OCI-LY7 (cell line): ENCODE measurements at regions of chr2 and their contacts with region 1.

Region 1: GRCh38 chr2:127753374-127753773 is 52.1 kb downstream of the SFT2D3 start:
- DNase-seq: no peak
- H3K4me3 ChIP-seq: no peak overlapping the region
- H3K27ac ChIP-seq: no peak overlapping the region
- H3K4me1 ChIP-seq: peaks cover 13% of the 10 kb centered on the region
- CTCF ChIP-seq: no peak

Region 2: DNA sequence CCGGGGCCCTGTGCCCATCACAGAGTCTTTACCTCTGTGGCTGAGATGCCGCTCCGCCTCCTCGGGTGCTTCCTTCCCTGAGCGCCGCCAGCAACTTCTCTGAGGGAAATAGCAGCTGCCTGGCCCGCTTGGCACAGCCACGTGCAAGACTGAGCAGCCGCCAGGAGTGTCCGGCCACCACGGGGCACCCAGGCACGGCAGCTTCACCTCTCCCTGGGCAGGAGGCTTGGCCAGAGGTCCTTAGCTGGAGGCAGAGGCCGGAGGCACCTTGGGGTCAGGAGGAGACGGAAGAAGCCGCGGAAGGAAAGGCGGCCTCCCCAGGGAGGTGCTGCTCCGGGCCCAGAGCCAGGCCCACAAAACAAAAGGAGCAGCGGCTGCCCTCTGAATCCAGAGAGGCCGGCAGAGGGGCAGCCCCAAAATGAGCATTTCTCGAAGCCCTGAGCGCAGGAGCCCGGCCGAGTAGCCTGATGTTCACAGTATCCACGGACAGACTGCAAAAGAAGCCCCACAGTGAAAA is 72.0 kb before region 1 on chr2:
- CTCF ChIA-PET with region 1: no interaction called
- POLR2A ChIA-PET with region 1: no interaction called
- intact Hi-C with region 1: no loop called
- DNase-seq: no peak
- H3K4me3 ChIP-seq: no peak overlapping the region
- H3K27ac ChIP-seq: no peak overlapping the region
- H3K4me1 ChIP-seq: no peaks in the 10 kb centered on the region
- CTCF ChIP-seq: no peak

Region 3: GRCh38 chr2:127829845-127830246 is 76.5 kb after region 1 on chr2:
- CTCF ChIA-PET with region 1: no interaction called
- POLR2A ChIA-PET with region 1: interaction called, 10 read pairs
- intact Hi-C with region 1: no loop called
- DNase-seq: peak; percentile 98
- H3K4me3 ChIP-seq: peak overlapping the region; percentile 61
- H3K27ac ChIP-seq: peak overlapping the region; percentile 99
- H3K4me1 ChIP-seq: peaks cover 47% of the 10 kb centered on the region
- CTCF ChIP-seq: no peak